Activated CD4-positive, alpha-beta memory T cell treated with anti-CD3 and anti-CD28 coated beads for 36 hours (primary cell): ENCODE measurements at regions of chr3 and their contacts with region 1.

Region 1: GRCh38 chr3:10026084-10026890 is at the start of gene FANCD2:
- DNase-seq: peak; percentile 96
- H3K4me3 Mint-ChIP-seq: peak within 1 kb of the TSS; percentile 97
- H3K27ac Mint-ChIP-seq: peak within 1 kb of the TSS; percentile 98
- H3K4me1 Mint-ChIP-seq: peaks cover 24% of the 10 kb centered on the region
- H3K27me3 Mint-ChIP-seq: no peaks in the 10 kb centered on the region
- total RNA-seq, gene FANCD2: 83.9 to 89.4 TPM

Region 2: GRCh38 chr3:9976721-9977709 is 49.3 kb before region 1 on chr3:
- CTCF ChIA-PET with region 1: no interaction called
- POLR2A ChIA-PET with region 1: no interaction called
- intact Hi-C with region 1: loop called (anchors 2 kb)
- DNase-seq: peak; percentile 69
- H3K4me3 Mint-ChIP-seq: no peak overlapping the region
- H3K27ac Mint-ChIP-seq: peak overlapping the region; percentile 64
- H3K4me1 Mint-ChIP-seq: peaks cover 26% of the 10 kb centered on the region
- H3K27me3 Mint-ChIP-seq: no peaks in the 10 kb centered on the region